Mammary epithelial cell (primary cell): ENCODE measurements at regions of chr5 and their contacts with region 1.

Region 1: GRCh38 chr5:112757468-112758208 is 20.0 kb downstream of the APC start:
- DNase-seq: peak; percentile 34
- H3K4me3 ChIP-seq: no peak overlapping the region
- H3K27ac ChIP-seq: no peak overlapping the region
- H3K4me1 ChIP-seq: peaks cover 4% of the 10 kb centered on the region
- H3K27me3 ChIP-seq: no peaks in the 10 kb centered on the region
- CTCF ChIP-seq: peak; percentile 71 to 82

Region 2: DNA sequence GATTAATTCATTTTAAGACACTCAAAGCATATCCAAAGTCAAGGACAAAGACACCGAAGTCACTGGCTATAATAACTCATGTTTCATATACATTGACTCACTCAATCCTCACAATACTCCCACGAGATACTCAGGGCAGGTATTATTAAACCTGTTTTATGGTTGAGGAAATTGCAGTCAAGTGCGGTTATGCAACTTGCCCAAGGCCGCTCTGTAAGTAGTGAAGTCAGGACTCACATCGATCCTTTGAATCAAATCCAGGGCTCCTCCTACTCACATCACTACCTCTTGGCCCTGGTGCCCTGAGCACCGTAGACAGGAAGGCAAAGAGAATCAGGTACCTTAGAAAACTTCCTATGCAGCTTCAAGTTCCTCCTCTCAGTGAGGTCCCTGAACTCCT is 107.8 kb before region 1 on chr5:
- CTCF ChIA-PET with region 1: no interaction called
- dilution Hi-C with region 1: no loop called
- in situ Hi-C with region 1: no loop called
- intact Hi-C with region 1: loop called (anchors 10 kb)
- DNase-seq: peak; percentile 93
- H3K4me3 ChIP-seq: no peak overlapping the region
- H3K27ac ChIP-seq: no peak overlapping the region
- H3K4me1 ChIP-seq: peaks cover 8% of the 10 kb centered on the region
- H3K27me3 ChIP-seq: no peaks in the 10 kb centered on the region
- CTCF ChIP-seq: no peak

Region 3: DNA sequence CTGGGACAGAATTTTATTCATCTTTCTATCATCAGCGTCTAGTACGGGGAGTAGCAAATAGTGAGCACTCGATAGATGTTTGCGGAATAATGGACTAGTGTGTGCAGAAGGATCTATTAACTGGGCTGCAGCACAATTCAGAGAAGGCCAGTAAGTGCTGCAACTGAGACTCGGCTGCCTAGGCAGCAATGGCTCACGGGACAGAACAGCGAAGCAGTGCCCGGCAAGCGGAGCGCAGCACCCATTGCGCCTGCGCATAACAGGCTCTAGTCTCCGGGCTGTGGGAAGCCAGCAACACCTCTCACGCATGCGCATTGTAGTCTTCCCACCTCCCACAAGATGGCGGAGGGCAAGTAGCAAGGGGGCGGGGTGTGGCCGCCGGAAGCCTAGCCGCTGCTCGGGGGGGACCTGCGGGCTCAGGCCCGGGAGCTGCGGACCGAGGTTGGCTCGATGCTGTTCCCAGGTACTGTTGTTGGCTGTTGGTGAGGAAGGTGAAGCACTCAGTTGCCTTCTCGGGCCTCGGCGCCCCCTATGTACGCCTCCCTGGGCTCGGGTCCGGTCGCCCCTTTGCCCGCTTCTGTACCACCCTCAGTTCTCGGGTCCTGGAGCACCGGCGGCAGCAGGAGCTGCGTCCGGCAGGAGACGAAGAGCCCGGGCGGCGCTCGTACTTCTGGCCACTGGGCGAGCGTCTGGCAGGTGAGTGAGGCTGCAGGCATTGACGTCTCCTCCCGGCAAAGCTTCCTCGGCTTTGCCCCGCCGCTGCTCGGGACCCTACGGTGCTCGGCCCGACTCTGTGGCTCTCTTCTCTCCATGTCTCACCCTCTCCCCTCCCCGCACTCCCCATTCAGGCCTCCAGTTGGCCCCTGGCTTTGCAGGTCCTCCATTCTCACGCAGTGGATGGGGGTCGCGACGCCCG is 50.2 kb before region 1 on chr5:
- CTCF ChIA-PET with region 1: no interaction called
- dilution Hi-C with region 1: no loop called
- in situ Hi-C with region 1: no loop called
- intact Hi-C with region 1: loop called (anchors 1 kb)
- DNase-seq: peak; percentile 95
- H3K4me3 ChIP-seq: peak overlapping the region; percentile 83 to 88 (median 85)
- H3K27ac ChIP-seq: peak overlapping the region; percentile 62
- H3K4me1 ChIP-seq: peaks cover 10% of the 10 kb centered on the region
- H3K27me3 ChIP-seq: no peaks in the 10 kb centered on the region
- CTCF ChIP-seq: no peak